Activated T-helper 1 cell treated with anti-CD3 and anti-CD28 coated beads, Interleukin-12 subunit alpha, Interleukin-12 subunit beta, Interleukin-2, Interleukin-4 antibody, amounts not matched to agents 30 ng/mL and 10 ng/mL and 1 ng/mL, durations not matched to agents 14 hours and 24 hours and 36 hours (primary cell): ENCODE measurements at regions of chr7 and their contacts with region 1.

Region 1: GRCh38 chr7:103296901-103297836 is at the start of gene PMPCB:
- DNase-seq: peak; percentile 92
- H3K4me3 Mint-ChIP-seq: peak within 1 kb of the TSS; percentile 92
- H3K27ac Mint-ChIP-seq: peak within 1 kb of the TSS; percentile 90
- H3K4me1 Mint-ChIP-seq: peaks cover 28% of the 10 kb centered on the region
- H3K27me3 Mint-ChIP-seq: peaks cover 10% of the 10 kb centered on the region
- total RNA-seq, gene PMPCB: 71.5 and 75.5 TPM in 2 replicates

Region 2: GRCh38 chr7:103074519-103075336 is 222.4 kb before region 1 on chr7 and contains the starts of genes ARMC10 and FBXL13:
- intact Hi-C with region 1: loop called (anchors 5 kb)
- DNase-seq: peak; percentile 84
- H3K4me3 Mint-ChIP-seq: peak within 1 kb of the TSS; percentile 98
- H3K27ac Mint-ChIP-seq: peak within 1 kb of the TSS; percentile 94
- H3K4me1 Mint-ChIP-seq: peaks cover 27% of the 10 kb centered on the region
- H3K27me3 Mint-ChIP-seq: no peaks in the 10 kb centered on the region
- total RNA-seq, gene ARMC10: 49.6 and 51.8 TPM in 2 replicates
- total RNA-seq, gene FBXL13: 0.34 and 0.54 TPM in 2 replicates

Region 3: GRCh38 chr7:103344453-103345149 is 47.4 kb after region 1 on chr7 and contains the start of gene DNAJC2:
- intact Hi-C with region 1: loop called (anchors 1 kb)
- DNase-seq: peak; percentile 80
- H3K4me3 Mint-ChIP-seq: peak within 1 kb of the TSS; percentile 100
- H3K27ac Mint-ChIP-seq: peak within 1 kb of the TSS; percentile 99
- H3K4me1 Mint-ChIP-seq: peaks cover 58% of the 10 kb centered on the region
- H3K27me3 Mint-ChIP-seq: no peaks in the 10 kb centered on the region
- total RNA-seq, gene DNAJC2: 63.8 and 68.6 TPM in 2 replicates

Region 4: GRCh38 chr7:103573479-103574058 is 276.4 kb after region 1 on chr7:
- intact Hi-C with region 1: loop called (anchors 10 kb)
- DNase-seq: no peak
- H3K4me3 Mint-ChIP-seq: no peak overlapping the region
- H3K27ac Mint-ChIP-seq: no peak overlapping the region
- H3K4me1 Mint-ChIP-seq: no peaks in the 10 kb centered on the region
- H3K27me3 Mint-ChIP-seq: peaks cover 2% of the 10 kb centered on the region

Region 5: GRCh38 chr7:104207731-104208420 is 910.7 kb after region 1 on chr7 and contains the start of gene ORC5:
- intact Hi-C with region 1: loop called (anchors 10 kb)
- DNase-seq: peak; percentile 79
- H3K4me3 Mint-ChIP-seq: peak within 1 kb of the TSS; percentile 94
- H3K27ac Mint-ChIP-seq: peak within 1 kb of the TSS; percentile 92
- H3K4me1 Mint-ChIP-seq: peaks cover 43% of the 10 kb centered on the region
- H3K27me3 Mint-ChIP-seq: peaks cover 8% of the 10 kb centered on the region
- total RNA-seq, gene ORC5: 32.5 and 35.8 TPM in 2 replicates